ENCODE measurements at regions of chrX and their contacts with region 1.

Region 1: DNA sequence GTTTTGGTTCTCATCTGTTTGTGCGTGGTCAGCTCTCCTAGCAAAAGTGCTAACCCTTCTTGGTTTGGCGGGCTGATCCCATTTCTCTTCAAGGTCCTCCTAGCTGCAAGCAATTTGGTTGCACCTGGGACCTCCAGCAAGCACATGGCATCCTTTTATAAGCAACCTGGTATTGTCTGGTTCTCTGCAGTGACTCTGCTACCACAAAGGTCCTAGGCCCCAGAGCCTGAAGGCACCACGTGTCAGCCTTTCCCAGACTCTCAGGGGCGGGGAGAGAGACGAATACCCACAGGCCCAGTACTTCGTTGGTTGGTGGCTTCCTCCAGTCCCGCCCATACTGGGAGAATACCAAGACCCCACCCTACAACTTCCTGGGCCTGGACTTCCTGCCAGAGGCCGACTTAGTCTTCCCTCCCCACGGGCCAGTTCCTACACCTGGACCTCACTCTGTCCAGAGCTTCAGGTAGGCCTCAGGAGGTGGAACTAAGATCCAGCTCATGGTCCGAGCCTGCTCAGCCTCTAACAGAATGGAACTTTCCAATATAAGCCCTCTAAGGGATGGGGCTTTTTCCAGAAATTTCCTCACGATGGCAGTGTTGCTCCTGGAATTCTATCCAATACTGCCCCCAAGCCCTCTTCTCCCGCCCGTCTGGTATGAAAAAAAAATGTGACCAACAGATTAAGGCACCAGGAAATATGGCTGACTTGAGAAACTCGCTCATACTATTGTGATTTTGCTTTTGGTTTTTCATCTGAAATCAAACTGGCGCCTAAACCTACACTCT is 192.5 kb upstream of the STK26 start:
- DNase-seq: peak; percentile 81
- H3K4me3 Mint-ChIP-seq: peak overlapping the region; percentile 85
- H3K27ac Mint-ChIP-seq: peak overlapping the region; percentile 91
- H3K4me1 Mint-ChIP-seq: peaks cover 33% of the 10 kb centered on the region
- H3K27me3 Mint-ChIP-seq: no peaks in the 10 kb centered on the region

Region 2: DNA sequence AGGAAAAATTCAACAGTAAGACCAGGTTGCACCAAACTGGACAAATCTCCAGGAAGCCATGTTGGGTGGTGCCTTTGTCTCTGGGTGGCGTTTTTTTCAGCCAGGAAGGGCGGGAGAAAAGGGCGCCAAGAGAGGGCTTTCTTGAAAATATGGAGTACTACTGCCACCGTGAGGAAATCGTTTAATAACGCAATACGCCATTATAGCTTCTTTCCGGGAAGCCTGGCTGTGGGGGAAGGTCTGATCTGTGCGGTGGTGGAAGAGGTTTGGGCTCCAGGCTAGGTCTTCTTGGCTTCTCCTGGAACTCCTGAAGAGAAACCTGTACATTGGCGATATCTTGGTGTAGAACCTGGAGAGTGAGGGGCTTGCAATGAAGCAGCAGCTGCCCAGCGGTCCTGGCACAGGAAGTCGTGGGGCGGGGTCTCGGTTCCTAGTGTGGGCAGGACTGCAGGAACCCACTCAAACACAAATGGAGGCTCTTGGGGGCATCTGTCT is 84.1 kb before region 1 on chrX:
- CTCF ChIA-PET with region 1: no interaction called
- POLR2A ChIA-PET with region 1: no interaction called
- intact Hi-C with region 1: no loop called
- DNase-seq: no peak
- H3K4me3 Mint-ChIP-seq: no peak overlapping the region
- H3K27ac Mint-ChIP-seq: no peak overlapping the region
- H3K4me1 Mint-ChIP-seq: no peaks in the 10 kb centered on the region
- H3K27me3 Mint-ChIP-seq: no peaks in the 10 kb centered on the region

Region 3: GRCh38 chrX:131812836-131813825 is 17.5 kb before region 1 on chrX:
- CTCF ChIA-PET with region 1: interaction called, 14 read pairs
- POLR2A ChIA-PET with region 1: no interaction called
- intact Hi-C with region 1: loop called (anchors 1 kb)
- DNase-seq: peak; percentile 79
- H3K4me3 Mint-ChIP-seq: peak overlapping the region; percentile 72
- H3K27ac Mint-ChIP-seq: peak overlapping the region; percentile 91
- H3K4me1 Mint-ChIP-seq: peaks cover 30% of the 10 kb centered on the region
- H3K27me3 Mint-ChIP-seq: no peaks in the 10 kb centered on the region

Region 4: DNA sequence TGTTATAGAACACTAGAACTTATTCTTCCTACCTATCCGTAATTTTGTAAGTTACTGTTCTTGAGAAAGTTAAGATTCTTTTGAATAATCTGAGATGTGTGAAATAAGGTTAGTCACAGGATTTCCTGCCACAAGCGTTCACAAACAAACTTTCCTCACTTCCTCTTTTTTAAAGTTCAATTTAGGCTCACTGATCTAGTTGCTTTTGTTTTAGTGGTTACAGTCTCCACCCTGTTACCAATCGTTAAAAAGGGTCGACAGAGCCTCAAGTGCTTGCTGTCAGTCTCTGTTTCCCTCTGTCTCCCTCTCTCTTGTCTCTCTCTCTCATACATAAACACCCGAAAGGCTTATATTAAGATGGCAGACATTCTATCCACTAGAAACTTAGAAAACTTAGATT is 156.7 kb after region 1 on chrX:
- CTCF ChIA-PET with region 1: no interaction called
- POLR2A ChIA-PET with region 1: no interaction called
- intact Hi-C with region 1: loop called (anchors 5 kb)
- DNase-seq: peak; percentile 9
- H3K4me3 Mint-ChIP-seq: peak overlapping the region; percentile 42
- H3K27ac Mint-ChIP-seq: peak overlapping the region; percentile 88
- H3K4me1 Mint-ChIP-seq: peaks cover 43% of the 10 kb centered on the region
- H3K27me3 Mint-ChIP-seq: no peaks in the 10 kb centered on the region

Region 5: GRCh38 chrX:132086672-132087071 is 256.1 kb after region 1 on chrX:
- CTCF ChIA-PET with region 1: interaction called, 4 read pairs
- POLR2A ChIA-PET with region 1: no interaction called
- intact Hi-C with region 1: loop called (anchors 10 kb)
- DNase-seq: no peak
- H3K4me3 Mint-ChIP-seq: no peak overlapping the region
- H3K27ac Mint-ChIP-seq: no peak overlapping the region
- H3K4me1 Mint-ChIP-seq: peaks cover 6% of the 10 kb centered on the region
- H3K27me3 Mint-ChIP-seq: peaks cover 2% of the 10 kb centered on the region

Region 6: GRCh38 chrX:132488819-132489577 is 658.4 kb after region 1 on chrX and contains the start of gene MBNL3:
- CTCF ChIA-PET with region 1: no interaction called
- POLR2A ChIA-PET with region 1: no interaction called
- intact Hi-C with region 1: loop called (anchors 2 kb)
- DNase-seq: peak; percentile 68
- H3K4me3 Mint-ChIP-seq: peak within 1 kb of the TSS; percentile 88
- H3K27ac Mint-ChIP-seq: peak within 1 kb of the TSS; percentile 91
- H3K4me1 Mint-ChIP-seq: peaks cover 38% of the 10 kb centered on the region
- H3K27me3 Mint-ChIP-seq: no peaks in the 10 kb centered on the region
- total RNA-seq, gene MBNL3: 13.7 to 14.7 TPM

Region 7: GRCh38 chrX:132520792-132521191 is 690.2 kb after region 1 on chrX:
- CTCF ChIA-PET with region 1: no interaction called
- POLR2A ChIA-PET with region 1: no interaction called
- intact Hi-C with region 1: no loop called
- DNase-seq: no peak
- H3K4me3 Mint-ChIP-seq: no peak overlapping the region
- H3K27ac Mint-ChIP-seq: no peak overlapping the region
- H3K4me1 Mint-ChIP-seq: no peaks in the 10 kb centered on the region
- H3K27me3 Mint-ChIP-seq: no peaks in the 10 kb centered on the region

Measured in activated CD4-positive, alpha-beta memory T cell treated with anti-CD3 and anti-CD28 coated beads for 36 hours (primary cell).